ENCODE measurements at regions of chr12 and their contacts with region 1.

Region 1: GRCh38 chr12:3896801-3897331 is 23.7 kb upstream of the PARP11 start:
- DNase-seq: peak in 1 of 9 experiments; percentile 7
- ATAC-seq: peak; percentile 28
- H3K4me3 ChIP-seq: peak overlapping the region in 1 of 2 experiments; percentile 9
- H3K4me3 Mint-ChIP-seq: peak overlapping the region; percentile 65
- H3K27ac ChIP-seq: peak overlapping the region; percentile 26 to 47
- H3K27ac Mint-ChIP-seq: peak overlapping the region; percentile 96
- H3K4me1 ChIP-seq: peaks cover 52% of the 10 kb centered on the region
- H3K4me1 Mint-ChIP-seq: peaks cover 39% of the 10 kb centered on the region
- H3K27me3 ChIP-seq: no peaks in the 10 kb centered on the region
- H3K27me3 Mint-ChIP-seq: no peaks in the 10 kb centered on the region
- CTCF ChIP-seq: no peak

Region 2: DNA sequence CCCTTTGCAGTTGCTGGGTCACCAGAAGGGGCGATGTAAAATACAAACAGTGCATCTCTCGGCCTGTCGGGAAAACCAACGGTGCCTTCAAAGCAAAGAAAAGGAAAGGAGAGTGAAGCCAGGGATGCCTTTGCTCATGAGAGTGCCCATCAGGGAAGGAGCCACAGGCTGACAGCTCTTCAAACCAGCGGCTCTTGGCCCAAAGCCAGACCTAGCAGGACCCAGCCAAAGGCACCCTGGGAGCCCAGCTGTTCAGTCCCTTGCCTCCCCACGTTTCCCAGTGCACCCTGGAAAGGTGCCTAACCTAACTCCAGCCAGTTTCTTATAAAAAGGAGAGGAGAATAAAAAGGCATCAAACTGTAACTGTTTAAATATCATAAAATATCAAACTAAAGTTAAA is 376.7 kb before region 1 on chr12:
- CTCF ChIA-PET with region 1: no interaction called
- POLR2A ChIA-PET with region 1: no interaction called
- intact Hi-C with region 1: no loop called
- DNase-seq: no peak
- ATAC-seq: no peak
- H3K4me3 ChIP-seq: no peak overlapping the region
- H3K4me3 Mint-ChIP-seq: no peak overlapping the region
- H3K27ac ChIP-seq: no peak overlapping the region
- H3K27ac Mint-ChIP-seq: no peak overlapping the region
- H3K4me1 ChIP-seq: no peaks in the 10 kb centered on the region
- H3K4me1 Mint-ChIP-seq: no peaks in the 10 kb centered on the region
- H3K27me3 ChIP-seq: peaks cover 0 to 3% of the 10 kb centered on the region in 2 experiments
- H3K27me3 Mint-ChIP-seq: peaks cover 15% of the 10 kb centered on the region
- CTCF ChIP-seq: no peak

Region 3: DNA sequence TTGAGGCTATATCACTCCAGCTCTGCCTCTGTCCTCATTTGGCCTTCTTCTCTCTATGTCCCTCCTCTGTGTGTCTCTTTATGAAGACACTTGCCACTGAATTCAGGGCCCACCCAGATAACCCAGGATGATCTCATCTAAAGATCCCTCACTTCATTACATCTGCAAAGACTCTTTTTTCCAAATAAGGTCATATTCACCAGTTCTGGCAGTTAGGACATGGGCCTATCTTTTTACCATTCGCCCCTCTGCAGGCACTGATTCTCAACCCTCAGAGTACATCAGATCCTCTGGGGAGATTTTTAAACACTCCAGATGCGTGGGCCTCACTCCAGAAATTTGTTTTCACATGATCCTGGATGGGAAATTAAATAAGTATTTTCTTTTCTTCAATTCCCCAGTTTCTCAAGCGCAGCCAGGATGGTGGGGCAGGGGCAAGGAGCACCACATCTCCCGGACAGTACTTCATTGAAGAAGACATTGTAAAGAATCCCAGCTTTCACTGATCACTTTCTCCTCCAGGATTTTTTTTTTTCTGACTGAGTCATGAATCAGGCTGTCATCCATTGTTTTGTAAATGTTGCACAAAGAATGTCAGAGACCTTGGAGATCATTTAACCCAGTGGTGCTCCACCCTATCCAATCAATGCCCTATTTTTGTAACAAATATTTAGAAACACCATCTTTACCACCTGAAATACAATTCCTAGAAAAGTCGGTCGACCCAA is 171.3 kb before region 1 on chr12:
- CTCF ChIA-PET with region 1: no interaction called
- POLR2A ChIA-PET with region 1: no interaction called
- intact Hi-C with region 1: no loop called
- DNase-seq: no peak
- ATAC-seq: no peak
- H3K4me3 ChIP-seq: no peak overlapping the region
- H3K4me3 Mint-ChIP-seq: no peak overlapping the region
- H3K27ac ChIP-seq: no peak overlapping the region
- H3K27ac Mint-ChIP-seq: no peak overlapping the region
- H3K4me1 ChIP-seq: peaks cover 34% of the 10 kb centered on the region
- H3K4me1 Mint-ChIP-seq: peaks cover 36% of the 10 kb centered on the region
- H3K27me3 ChIP-seq: no peaks in the 10 kb centered on the region
- H3K27me3 Mint-ChIP-seq: no peaks in the 10 kb centered on the region
- CTCF ChIP-seq: no peak

Region 4: DNA sequence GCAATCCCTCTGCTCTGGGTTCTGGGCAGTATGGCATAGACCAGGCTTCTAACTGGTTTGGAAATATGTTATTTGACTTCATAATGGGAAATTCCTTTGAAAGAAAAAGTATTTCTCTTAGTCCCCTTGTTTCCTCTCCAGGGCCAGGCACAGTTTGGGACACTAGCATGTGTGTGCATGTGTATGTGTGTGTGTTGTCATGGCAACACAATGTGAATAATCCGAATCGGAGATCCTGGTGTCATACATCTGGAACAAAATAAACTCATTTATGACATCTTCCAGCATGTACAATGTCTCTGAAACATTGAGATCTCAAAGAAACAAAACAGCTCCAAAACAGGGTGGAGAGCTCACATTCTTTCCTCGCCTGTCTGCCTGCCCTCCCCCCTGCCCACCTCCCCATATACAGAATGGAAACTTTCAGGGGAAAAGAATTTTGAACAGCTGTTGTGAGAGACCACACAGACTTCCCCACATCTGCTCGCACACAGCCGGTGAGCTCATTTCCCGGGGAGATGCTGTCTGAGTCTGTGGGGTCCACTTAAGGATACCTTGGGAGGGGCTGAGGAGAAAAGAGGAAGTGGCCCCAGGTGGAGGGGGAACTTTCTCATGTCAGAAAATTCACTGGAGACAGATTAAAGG is 31.8 kb after region 1 on chr12:
- CTCF ChIA-PET with region 1: no interaction called
- POLR2A ChIA-PET with region 1: interaction called, 4 read pairs
- intact Hi-C with region 1: loop called in 1 of 2 experiments (anchors 5 kb)
- DNase-seq: no peak
- ATAC-seq: no peak
- H3K4me3 ChIP-seq: no peak overlapping the region
- H3K4me3 Mint-ChIP-seq: no peak overlapping the region
- H3K27ac ChIP-seq: no peak overlapping the region
- H3K27ac Mint-ChIP-seq: no peak overlapping the region
- H3K4me1 ChIP-seq: peaks cover 23% of the 10 kb centered on the region
- H3K4me1 Mint-ChIP-seq: peaks cover 53% of the 10 kb centered on the region
- H3K27me3 ChIP-seq: no peaks in the 10 kb centered on the region
- H3K27me3 Mint-ChIP-seq: no peaks in the 10 kb centered on the region
- CTCF ChIP-seq: no peak

Region 5: DNA sequence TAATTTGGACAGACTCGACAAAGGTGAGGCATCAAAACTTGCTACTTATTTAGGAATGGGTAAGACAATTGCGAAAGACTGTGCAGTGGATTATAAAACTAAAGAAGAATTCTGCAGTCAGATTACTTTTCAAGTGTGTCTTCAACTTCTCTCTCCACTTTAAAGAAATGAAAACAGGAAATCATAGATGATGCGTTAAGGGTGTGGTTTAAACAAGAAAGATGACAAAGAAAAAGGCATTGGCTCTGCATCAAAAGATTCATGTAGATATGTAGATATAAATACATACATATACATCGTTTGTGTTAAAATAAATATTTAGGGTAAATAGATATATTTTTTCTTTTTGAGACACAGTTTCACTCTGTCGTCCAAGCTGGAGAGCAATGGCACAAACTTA is 50.9 kb after region 1 on chr12:
- CTCF ChIA-PET with region 1: interaction called, 7 read pairs
- POLR2A ChIA-PET with region 1: interaction called, 11 read pairs
- intact Hi-C with region 1: loop called in 1 of 2 experiments (anchors 5 kb)
- DNase-seq: peak in 2 of 9 experiments; percentile 55 to 75
- ATAC-seq: peak; percentile 75
- H3K4me3 ChIP-seq: no peak overlapping the region
- H3K4me3 Mint-ChIP-seq: peak overlapping the region; percentile 36
- H3K27ac ChIP-seq: peak overlapping the region; percentile 38 to 61
- H3K27ac Mint-ChIP-seq: peak overlapping the region; percentile 98
- H3K4me1 ChIP-seq: peaks cover 53% of the 10 kb centered on the region
- H3K4me1 Mint-ChIP-seq: peaks cover 62% of the 10 kb centered on the region
- H3K27me3 ChIP-seq: no peaks in the 10 kb centered on the region
- H3K27me3 Mint-ChIP-seq: no peaks in the 10 kb centered on the region
- CTCF ChIP-seq: no peak

Region 6: DNA sequence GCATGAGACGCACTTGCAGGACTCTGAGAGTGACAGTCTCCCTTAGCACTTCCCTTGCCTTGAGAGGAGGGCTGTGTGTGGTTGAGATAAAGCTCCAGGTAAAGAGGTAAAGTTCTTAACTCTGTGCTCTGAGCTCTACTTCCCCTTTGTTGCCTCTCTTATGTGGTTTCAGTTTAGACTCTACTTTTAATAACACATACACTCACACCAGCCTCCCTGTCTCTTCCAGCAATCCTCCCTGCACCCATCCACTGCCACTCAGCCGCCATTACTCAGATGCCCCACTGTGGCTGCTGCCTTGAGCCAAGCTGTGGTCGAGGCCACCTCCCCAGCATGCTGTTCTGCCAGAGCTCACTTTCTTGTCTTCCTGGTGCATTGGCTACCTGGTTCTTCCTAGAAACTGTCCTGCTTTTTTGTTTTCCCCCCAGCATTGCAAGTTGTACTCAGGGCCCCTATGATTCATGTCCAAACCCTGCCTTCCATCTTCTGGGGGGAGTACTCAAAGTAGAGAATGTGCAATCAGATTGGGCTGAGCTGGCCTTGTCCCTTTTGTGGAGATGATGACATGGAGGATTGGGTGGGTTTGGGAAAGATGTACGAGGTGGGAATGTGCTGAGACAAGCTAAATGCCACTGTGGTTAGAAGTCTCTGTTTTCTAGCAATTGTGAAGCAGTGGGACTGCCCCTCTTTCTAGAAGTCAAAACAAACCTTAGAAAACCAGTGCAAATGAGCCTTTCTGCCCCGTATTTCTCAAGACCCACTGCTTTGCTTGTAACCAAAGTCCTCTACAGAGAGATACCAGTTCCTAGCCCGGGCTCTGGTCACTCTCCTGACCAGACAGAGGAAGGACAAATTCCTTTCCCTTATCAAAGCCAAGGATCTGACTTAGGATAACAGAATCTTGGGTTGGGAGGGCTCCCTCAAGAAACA is 91.9 kb after region 1 on chr12:
- CTCF ChIA-PET with region 1: interaction called, 7 read pairs
- POLR2A ChIA-PET with region 1: interaction called, 13 read pairs
- intact Hi-C with region 1: no loop called
- DNase-seq: peak in 6 of 9 experiments; percentile 26 to 60 (median 30)
- ATAC-seq: peak; percentile 89
- H3K4me3 ChIP-seq: peak overlapping the region in 1 of 2 experiments; percentile 2
- H3K4me3 Mint-ChIP-seq: peak overlapping the region; percentile 60
- H3K27ac ChIP-seq: peak overlapping the region; percentile 5 to 52
- H3K27ac Mint-ChIP-seq: peak overlapping the region; percentile 91
- H3K4me1 ChIP-seq: peaks cover 29% of the 10 kb centered on the region
- H3K4me1 Mint-ChIP-seq: peaks cover 30% of the 10 kb centered on the region
- H3K27me3 ChIP-seq: no peaks in the 10 kb centered on the region
- H3K27me3 Mint-ChIP-seq: no peaks in the 10 kb centered on the region
- CTCF ChIP-seq: no peak

Region 7: DNA sequence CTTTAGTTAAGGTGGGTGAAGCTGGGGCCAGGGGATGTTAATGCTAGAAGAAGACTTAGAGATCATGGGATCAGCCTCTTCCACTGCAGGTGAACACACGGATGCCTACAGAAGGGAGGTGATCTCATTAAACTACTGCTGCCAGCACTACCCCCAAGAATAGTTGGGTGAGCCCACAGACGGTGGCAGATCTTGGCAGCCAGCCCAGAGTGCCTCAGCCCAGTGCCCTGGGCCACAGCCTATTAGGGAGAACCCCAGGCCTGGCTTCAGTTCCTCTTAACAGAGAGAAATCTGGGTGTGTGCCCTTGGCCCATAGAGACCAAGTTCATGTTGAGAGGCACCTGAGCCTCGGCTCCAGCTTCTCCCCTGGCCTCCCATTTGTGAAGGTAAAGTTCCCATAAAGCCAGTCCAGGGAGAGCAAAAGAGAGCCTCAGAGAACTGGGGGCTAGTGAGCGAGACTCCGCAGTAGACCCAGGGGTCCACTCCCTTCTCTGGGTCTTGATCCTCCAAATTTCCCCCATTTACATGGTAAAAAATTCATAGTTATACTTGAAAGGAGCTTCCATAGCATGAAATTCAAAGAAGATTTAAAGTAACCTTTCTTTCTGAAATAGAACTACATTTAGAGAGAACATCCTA is 251.7 kb after region 1 on chr12:
- CTCF ChIA-PET with region 1: no interaction called
- POLR2A ChIA-PET with region 1: no interaction called
- intact Hi-C with region 1: loop called in 1 of 2 experiments (anchors 5 kb)
- DNase-seq: peak; percentile 29 to 75 (median 51)
- ATAC-seq: peak; percentile 65
- H3K4me3 ChIP-seq: no peak overlapping the region
- H3K4me3 Mint-ChIP-seq: no peak overlapping the region
- H3K27ac ChIP-seq: no peak overlapping the region
- H3K27ac Mint-ChIP-seq: no peak overlapping the region
- H3K4me1 ChIP-seq: peaks cover 20% of the 10 kb centered on the region
- H3K4me1 Mint-ChIP-seq: peaks cover 36% of the 10 kb centered on the region
- H3K27me3 ChIP-seq: no peaks in the 10 kb centered on the region
- H3K27me3 Mint-ChIP-seq: no peaks in the 10 kb centered on the region
- CTCF ChIP-seq: no peak